GM23248 (cell line): ENCODE measurements at regions of chr3 and their contacts with region 1.

Region 1: DNA sequence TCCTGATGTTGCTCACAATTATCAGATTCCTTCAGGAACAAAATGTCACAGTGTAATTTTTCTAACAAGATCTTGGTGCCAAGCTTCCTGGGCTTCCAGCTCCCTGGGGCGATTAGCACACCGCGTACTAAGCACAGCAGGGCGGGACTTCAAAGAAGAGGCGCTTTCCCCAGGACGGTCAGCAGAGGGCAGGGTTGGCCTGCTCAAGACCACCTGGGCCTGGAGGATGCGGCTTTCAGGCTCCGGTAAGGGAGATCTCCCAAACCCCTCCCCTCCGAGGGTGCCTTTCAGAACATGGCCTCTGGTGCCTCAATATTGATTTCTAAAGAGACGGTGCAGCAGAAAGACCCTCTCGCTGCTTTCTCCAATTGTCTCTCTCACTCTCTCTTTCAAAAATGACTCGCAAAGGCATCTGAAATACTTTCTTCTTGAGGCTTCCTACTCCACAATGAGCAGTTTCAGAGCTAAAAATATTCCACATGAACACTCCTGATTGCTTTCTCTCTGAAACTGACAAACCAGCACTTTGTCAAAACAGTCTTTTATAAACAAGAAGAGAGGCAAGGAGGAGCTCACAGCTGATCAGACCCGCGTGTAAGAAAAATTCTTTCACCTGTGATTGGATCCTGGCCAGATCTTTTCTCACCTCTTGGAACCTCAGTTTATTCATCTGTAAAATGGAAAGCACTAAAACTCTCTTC is 154.0 kb downstream of the ADAMTS9 start:
- DNase-seq: peak; percentile 90
- H3K4me3 ChIP-seq: peak overlapping the region; percentile 13; the same call in 1 of the 2 replicates
- H3K27ac ChIP-seq: no peak overlapping the region
- H3K4me1 ChIP-seq: no peaks in the 10 kb centered on the region; the same call in 1 of the 2 replicates
- H3K27me3 ChIP-seq: no peaks in the 10 kb centered on the region

Region 2: DNA sequence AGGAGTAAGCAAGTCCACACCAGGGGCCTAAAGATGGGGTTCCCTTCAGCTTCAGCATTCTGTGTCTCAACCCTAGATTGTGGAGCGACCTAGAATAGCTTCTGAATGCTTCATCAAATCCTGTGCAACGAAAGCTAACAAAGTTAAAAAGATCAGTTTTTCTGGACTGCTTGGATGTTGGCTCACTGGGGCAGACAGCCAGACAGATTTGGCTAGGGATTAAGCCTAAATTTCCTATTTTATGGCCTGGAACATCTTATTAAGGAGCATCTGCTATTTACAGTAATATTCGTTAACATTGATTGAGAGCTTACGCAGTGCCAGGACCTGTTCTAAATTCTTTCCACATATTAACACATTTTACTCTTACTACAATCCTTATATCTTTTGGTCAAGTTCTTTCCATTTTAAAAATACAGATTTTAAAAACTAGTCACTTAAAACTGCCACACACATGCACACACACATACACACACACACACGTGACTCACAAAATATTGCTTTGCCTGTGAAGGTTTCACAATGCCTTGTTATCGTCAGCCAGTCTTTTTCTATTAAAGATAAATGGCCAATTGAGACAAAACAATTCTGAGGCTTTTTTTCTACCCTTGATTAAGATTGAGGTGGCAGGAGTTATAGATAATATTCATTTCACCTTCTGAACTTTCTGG is 1054.6 kb before region 1 on chr3:
- in situ Hi-C with region 1: no loop called
- DNase-seq: peak; percentile 46
- H3K4me3 ChIP-seq: no peak overlapping the region
- H3K27ac ChIP-seq: no peak overlapping the region
- H3K4me1 ChIP-seq: no peaks in the 10 kb centered on the region
- H3K27me3 ChIP-seq: no peaks in the 10 kb centered on the region

Region 3: GRCh38 chr3:65245133-65246063 is 711.6 kb after region 1 on chr3:
- in situ Hi-C with region 1: loop called (anchors 10 kb)
- DNase-seq: peak; percentile 37
- H3K4me3 ChIP-seq: no peak overlapping the region
- H3K27ac ChIP-seq: no peak overlapping the region
- H3K4me1 ChIP-seq: no peaks in the 10 kb centered on the region
- H3K27me3 ChIP-seq: 0 out of 2 replicates have a peak, but pooled peaks cover 11% of the 10 kb centered on the region